GM10248 (cell line): ENCODE measurements at regions of chr18 and their contacts with region 1.

Region 1: GRCh38 chr18:58128381-58129374 is 84.7 kb downstream of the NEDD4L start:
- DNase-seq: no peak
- CTCF ChIP-seq: no peak

Region 2: GRCh38 chr18:58043491-58044379 is 84.9 kb before region 1 on chr18 and contains the start of gene NEDD4L:
- CTCF ChIA-PET with region 1: interaction called, 39 read pairs
- POLR2A ChIA-PET with region 1: no interaction called
- DNase-seq: peak; percentile 87
- CTCF ChIP-seq: peak; percentile 73